Mammary epithelial cell (primary cell): ENCODE measurements at regions of chr11 and their contacts with region 1.

Region 1: GRCh38 chr11:5684646-5685362 is at the start of gene TRIM5:
- DNase-seq: peak; percentile 93
- H3K4me3 ChIP-seq: peak within 1 kb of the TSS; percentile 50 to 53 (median 50)
- H3K27ac ChIP-seq: peak within 1 kb of the TSS; percentile 71
- H3K4me1 ChIP-seq: peaks cover 19% of the 10 kb centered on the region
- H3K27me3 ChIP-seq: no peaks in the 10 kb centered on the region
- CTCF ChIP-seq: peak; percentile 45 to 79
- total RNA-seq, gene TRIM5: 19.8 to 28.3 TPM

Region 2: DNA sequence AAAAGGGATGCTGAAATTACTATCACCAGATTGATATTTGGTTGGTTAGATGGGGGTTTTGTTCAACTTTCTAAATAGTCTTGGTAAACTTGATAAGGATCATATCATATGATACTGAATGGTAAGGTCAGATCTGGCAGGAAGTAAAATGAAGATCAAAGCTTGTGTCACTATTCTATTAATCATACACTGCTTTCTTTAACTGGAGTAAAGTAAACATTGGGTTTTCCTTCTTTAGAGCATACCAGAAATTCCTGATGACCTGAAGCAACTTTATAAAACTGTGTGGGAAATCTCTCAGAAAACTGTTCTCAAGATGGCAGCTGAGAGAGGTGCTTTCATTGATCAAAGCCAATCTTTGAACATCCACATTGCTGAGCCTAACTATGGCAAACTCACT is 1550.0 kb before region 1 on chr11:
- CTCF ChIA-PET with region 1: interaction called, 11 read pairs
- dilution Hi-C with region 1: no loop called
- in situ Hi-C with region 1: no loop called
- intact Hi-C with region 1: no loop called
- DNase-seq: peak; percentile 27
- H3K4me3 ChIP-seq: no peak overlapping the region
- H3K27ac ChIP-seq: no peak overlapping the region
- H3K4me1 ChIP-seq: peaks cover 4% of the 10 kb centered on the region
- H3K27me3 ChIP-seq: no peaks in the 10 kb centered on the region
- CTCF ChIP-seq: no peak

Region 3: DNA sequence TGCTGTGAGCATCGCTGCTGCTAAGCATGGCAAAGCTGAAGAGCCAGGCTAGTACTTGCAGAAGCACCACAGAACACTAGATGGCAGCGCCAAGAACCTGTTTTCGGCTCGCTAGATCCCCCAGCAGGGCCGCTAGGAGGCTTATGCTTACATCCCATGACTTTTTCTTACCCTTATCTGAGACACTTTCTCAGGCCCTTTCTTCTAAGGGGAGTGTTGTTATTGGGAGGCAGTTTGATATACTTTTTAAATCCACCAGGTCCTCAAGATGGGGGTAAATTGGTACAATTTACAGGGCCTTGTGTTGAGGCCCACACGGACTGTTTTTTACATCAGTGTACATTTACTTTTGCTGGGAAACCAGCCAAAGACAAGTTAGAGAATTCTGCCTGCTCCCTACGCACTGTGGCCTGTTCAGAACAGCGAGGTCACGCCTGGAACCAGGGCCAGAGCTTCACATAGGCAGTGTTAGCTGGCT is 84.4 kb before region 1 on chr11:
- CTCF ChIA-PET with region 1: no interaction called
- dilution Hi-C with region 1: no loop called
- in situ Hi-C with region 1: no loop called
- intact Hi-C with region 1: loop called (anchors 2 kb)
- DNase-seq: no peak
- H3K4me3 ChIP-seq: no peak overlapping the region
- H3K27ac ChIP-seq: no peak overlapping the region
- H3K4me1 ChIP-seq: peaks cover 5% of the 10 kb centered on the region
- H3K27me3 ChIP-seq: no peaks in the 10 kb centered on the region
- CTCF ChIP-seq: peak; percentile 77 to 86

Region 4: GRCh38 chr11:5624489-5625279 is 60.1 kb before region 1 on chr11 and contains the start of gene TRIM34:
- CTCF ChIA-PET with region 1: no interaction called
- dilution Hi-C with region 1: no loop called
- in situ Hi-C with region 1: no loop called
- intact Hi-C with region 1: loop called (anchors 1 kb)
- DNase-seq: peak; percentile 76
- H3K4me3 ChIP-seq: peak within 1 kb of the TSS; percentile 53 to 69 (median 63)
- H3K27ac ChIP-seq: peak within 1 kb of the TSS; percentile 60
- H3K4me1 ChIP-seq: peaks cover 26% of the 10 kb centered on the region
- H3K27me3 ChIP-seq: no peaks in the 10 kb centered on the region
- CTCF ChIP-seq: no peak
- total RNA-seq, gene TRIM34: 2.4 to 5.7 TPM

Region 5: DNA sequence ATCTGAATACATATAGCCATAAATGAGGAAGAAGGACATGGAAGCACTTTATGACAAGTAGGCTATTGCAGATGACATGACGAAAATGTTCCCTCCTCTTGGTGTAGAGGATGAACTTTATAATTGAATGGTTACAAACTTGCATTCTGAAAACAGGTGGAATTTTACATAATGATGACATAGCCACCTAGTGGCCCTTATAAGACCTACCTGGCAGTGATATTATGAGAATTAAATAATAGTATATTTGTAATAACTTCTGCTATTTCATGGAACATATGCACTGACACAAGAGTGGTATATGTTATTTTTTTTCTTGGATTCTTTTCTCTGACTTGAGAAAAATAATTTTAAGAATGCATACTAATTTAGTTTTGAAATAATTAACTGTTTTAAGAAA is 27.7 kb after region 1 on chr11:
- CTCF ChIA-PET with region 1: interaction called, 5 read pairs
- dilution Hi-C with region 1: no loop called
- in situ Hi-C with region 1: no loop called
- intact Hi-C with region 1: loop called (anchors 1 kb)
- DNase-seq: no peak
- H3K4me3 ChIP-seq: no peak overlapping the region
- H3K27ac ChIP-seq: no peak overlapping the region
- H3K4me1 ChIP-seq: no peaks in the 10 kb centered on the region
- H3K27me3 ChIP-seq: no peaks in the 10 kb centered on the region
- CTCF ChIP-seq: peak; percentile 58 to 60